Activated CD8-positive, alpha-beta T cell treated with anti-CD3 and anti-CD28 coated beads for 36 hours (primary cell): ENCODE measurements at regions of chr11 and their contacts with region 1.

Region 1: DNA sequence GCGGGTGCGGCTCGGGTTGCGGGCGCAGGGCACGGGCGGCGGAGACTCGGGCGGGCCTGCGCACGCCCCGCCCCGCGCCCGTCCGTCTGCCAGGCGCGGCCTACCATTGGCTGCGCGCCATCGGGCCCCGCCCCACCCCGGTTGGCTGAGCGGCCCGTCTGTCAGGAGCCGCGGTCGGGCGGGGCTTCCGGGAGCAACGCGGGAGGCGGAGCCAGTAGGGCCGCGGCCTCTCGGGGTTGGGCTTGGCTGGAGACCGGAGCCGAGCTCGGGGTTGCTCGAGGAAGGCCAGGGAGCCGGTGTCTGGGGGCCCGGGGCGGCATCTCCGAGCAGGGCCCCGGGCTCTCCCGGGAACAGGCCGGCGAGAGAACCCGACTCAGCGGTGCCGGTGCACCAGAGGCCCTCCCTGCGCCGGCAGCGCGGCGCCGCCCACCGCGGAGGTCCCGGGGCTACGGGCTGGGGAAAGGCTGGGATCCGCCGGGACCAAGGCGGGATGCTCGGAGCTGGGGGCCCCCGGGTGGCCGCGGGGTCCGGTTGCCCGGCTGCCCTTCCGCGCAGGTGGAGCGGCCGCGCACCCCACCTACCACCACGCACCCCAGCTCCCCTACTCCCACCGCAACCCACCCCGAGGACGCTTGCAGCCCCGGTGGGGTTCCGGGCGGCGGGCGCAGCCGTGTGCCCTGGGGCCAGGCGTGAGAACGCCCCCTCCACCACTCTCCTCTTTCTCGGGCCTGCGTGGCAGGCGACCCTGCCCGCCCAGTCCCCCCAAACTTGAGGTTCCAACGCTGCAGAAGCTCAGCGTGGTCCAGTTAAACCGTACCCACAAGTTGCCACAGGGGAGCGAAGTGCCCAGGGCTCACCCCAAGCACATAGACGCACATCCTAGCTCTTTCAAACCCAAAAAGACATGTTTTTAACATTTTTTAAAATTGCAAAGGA is at the start of gene HRAS:
- DNase-seq: peak; percentile 95
- ATAC-seq: peak; percentile 94
- H3K4me3 Mint-ChIP-seq: peak within 1 kb of the TSS; percentile 90
- H3K27ac Mint-ChIP-seq: peak within 1 kb of the TSS; percentile 91
- H3K4me1 Mint-ChIP-seq: peaks cover 4% of the 10 kb centered on the region
- H3K27me3 Mint-ChIP-seq: no peaks in the 10 kb centered on the region
- CTCF ChIP-seq: no peak
- total RNA-seq, gene HRAS: 30.4 to 34.6 TPM

Region 2: GRCh38 chr11:416757-417621 is 118.8 kb before region 1 on chr11:
- CTCF ChIA-PET with region 1: no interaction called
- POLR2A ChIA-PET with region 1: no interaction called
- intact Hi-C with region 1: no loop called
- DNase-seq: peak; percentile 56
- ATAC-seq: peak; percentile 31
- H3K4me3 Mint-ChIP-seq: peak overlapping the region; percentile 77
- H3K27ac Mint-ChIP-seq: no peak overlapping the region
- H3K4me1 Mint-ChIP-seq: peaks cover 24% of the 10 kb centered on the region
- H3K27me3 Mint-ChIP-seq: no peaks in the 10 kb centered on the region
- CTCF ChIP-seq: no peak

Region 3: DNA sequence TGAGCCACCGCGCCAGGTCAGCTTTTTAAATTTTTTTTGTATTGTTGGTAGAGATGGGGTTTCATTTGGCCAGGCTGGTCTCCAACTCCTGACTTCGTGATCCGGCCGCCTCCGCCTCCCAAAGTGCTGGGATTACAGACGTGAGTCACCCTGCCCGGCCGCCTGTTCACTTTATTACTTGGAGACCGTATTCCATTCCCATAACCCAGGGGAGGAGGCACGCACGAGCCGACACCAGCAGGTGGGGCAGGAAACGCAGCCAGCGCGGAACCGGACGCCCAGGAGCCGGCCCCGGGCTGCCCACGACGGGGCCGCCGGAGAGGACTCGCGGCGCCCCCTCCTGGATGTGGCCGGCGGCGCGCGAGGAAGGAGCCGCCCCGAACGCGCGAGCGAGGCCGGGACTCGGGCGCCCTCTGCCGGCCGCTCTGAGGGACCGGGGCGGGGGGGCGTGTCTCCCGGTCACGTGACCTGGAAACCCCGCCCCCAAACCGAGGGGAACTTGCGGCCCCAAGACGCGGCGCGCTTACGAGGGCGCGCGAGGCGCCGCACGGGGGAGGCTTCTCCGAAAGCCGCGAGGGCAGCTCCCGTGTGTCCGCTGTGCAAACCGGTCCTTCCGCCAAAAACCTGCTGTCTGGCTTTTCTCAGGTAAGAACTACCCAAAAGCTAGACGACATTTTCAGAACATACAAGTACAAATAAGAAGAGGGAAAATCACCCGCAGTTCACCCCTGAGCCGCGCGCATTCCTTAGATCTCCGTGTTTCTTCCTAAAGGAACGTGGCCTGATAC is 17.1 kb before region 1 on chr11:
- CTCF ChIA-PET with region 1: interaction called, 29 read pairs
- POLR2A ChIA-PET with region 1: interaction called, 5 read pairs
- intact Hi-C with region 1: no loop called
- DNase-seq: peak; percentile 86
- ATAC-seq: peak; percentile 97
- H3K4me3 Mint-ChIP-seq: peak overlapping the region; percentile 74
- H3K27ac Mint-ChIP-seq: peak overlapping the region; percentile 68
- H3K4me1 Mint-ChIP-seq: peaks cover 3% of the 10 kb centered on the region
- H3K27me3 Mint-ChIP-seq: no peaks in the 10 kb centered on the region
- CTCF ChIP-seq: peak; percentile 100

Region 4: DNA sequence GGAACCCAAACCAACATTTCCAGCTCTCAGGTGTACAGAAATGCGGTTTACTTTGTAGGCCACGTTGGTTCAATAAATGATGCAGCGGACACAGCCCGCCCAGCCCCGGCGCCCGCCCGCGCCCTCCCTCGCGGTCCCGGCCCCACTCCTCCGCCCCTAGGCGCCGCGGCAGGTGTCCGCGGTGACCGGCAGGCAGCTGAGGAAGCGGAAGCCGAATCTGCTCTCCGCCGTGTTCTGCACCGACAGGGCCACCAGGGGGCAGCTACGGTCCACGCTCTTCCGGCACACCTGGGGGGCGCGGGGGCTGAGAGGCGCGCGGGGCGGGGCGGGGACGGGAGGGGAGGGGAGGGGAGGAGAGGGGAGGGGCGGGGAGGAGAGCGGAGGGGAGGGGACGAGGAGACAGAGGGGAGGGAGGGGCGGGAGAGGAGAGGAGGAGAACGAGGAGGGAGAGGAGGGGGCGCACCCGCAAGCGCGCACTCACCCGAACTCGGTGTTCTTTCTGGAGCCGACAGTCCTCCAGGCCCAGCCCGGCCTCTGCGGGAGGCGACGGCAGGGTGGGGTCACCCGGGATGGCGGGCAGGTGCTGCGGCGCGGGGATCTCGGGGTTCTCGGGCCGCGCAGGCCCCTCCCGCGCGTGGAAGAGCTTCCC is 19.2 kb after region 1 on chr11:
- CTCF ChIA-PET with region 1: interaction called, 12 read pairs
- POLR2A ChIA-PET with region 1: interaction called, 10 read pairs
- intact Hi-C with region 1: no loop called
- DNase-seq: peak; percentile 79
- ATAC-seq: peak; percentile 86
- H3K4me3 Mint-ChIP-seq: peak overlapping the region; percentile 10
- H3K27ac Mint-ChIP-seq: no peak overlapping the region
- H3K4me1 Mint-ChIP-seq: peaks cover 5% of the 10 kb centered on the region
- H3K27me3 Mint-ChIP-seq: peaks cover 2% of the 10 kb centered on the region
- CTCF ChIP-seq: peak; percentile 49

Region 5: GRCh38 chr11:560305-561147 is 24.7 kb after region 1 on chr11 and contains the starts of genes LMNTD2 and RASSF7:
- CTCF ChIA-PET with region 1: interaction called, 12 read pairs
- POLR2A ChIA-PET with region 1: interaction called, 10 read pairs
- intact Hi-C with region 1: no loop called
- DNase-seq: peak; percentile 95
- ATAC-seq: peak; percentile 96
- H3K4me3 Mint-ChIP-seq: peak within 1 kb of the TSS; percentile 89
- H3K27ac Mint-ChIP-seq: peak within 1 kb of the TSS; percentile 30
- H3K4me1 Mint-ChIP-seq: peaks cover 11% of the 10 kb centered on the region
- H3K27me3 Mint-ChIP-seq: peaks cover 2% of the 10 kb centered on the region
- CTCF ChIP-seq: no peak
- total RNA-seq, gene LMNTD2: 0.88 to 1.3 TPM
- total RNA-seq, gene RASSF7: 16.8 to 17.3 TPM

Region 6: DNA sequence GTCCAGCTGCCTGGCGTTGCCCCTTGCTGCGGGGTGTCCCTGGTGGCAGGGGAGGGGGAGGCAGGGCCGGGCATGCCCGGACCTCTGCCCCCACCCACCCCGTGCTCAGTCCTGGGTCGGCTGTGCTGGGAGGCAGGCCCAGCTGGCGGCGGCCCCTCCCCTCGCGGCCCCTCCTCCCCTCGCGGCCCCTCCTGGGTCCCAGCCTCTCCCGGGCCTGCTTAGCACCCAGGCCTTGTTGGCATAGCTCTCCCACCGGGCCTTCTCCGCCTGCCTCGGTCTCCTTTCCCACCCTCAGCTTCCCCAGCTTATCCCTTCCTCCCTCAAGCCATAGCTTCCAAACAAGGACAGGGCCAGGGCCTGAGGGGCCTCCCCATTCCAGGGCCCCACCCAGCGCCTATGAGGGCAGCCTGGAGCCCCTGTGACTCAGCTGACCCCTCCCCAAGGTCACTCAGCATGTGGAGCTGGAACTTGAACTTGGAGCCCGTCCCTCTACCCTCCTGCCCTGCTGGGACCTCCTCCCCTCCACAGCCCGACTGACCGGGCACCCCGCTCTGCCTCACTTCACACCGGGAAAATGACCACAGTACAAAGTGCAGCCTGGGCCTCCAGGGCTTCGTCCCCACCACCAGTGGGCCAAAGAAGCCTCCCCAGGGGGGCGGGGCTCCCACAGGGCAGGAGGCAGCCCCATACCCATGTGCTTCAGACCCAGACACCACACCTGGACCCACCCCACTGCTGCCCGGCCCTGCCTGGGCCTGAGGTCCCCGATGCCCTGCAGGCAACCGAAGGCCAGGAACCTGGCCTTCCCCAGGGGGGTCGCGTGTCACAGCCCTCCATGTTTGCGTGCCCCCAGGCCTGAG is 171.4 kb after region 1 on chr11:
- CTCF ChIA-PET with region 1: no interaction called
- POLR2A ChIA-PET with region 1: no interaction called
- intact Hi-C with region 1: no loop called
- DNase-seq: no peak
- ATAC-seq: no peak
- H3K4me3 Mint-ChIP-seq: no peak overlapping the region
- H3K27ac Mint-ChIP-seq: no peak overlapping the region
- H3K4me1 Mint-ChIP-seq: peaks cover 8% of the 10 kb centered on the region
- H3K27me3 Mint-ChIP-seq: peaks cover 16% of the 10 kb centered on the region
- CTCF ChIP-seq: no peak